CD4-positive, alpha-beta T cell (primary cell): ENCODE measurements at regions of chr5 and their contacts with region 1.

Region 1: GRCh38 chr5:154754460-154755360 is 467 bp upstream of the LARP1 start:
- DNase-seq: peak; percentile 98 to 100 (median 99)
- ATAC-seq: peak; percentile 86
- H3K4me3 ChIP-seq: peak overlapping the region; percentile 72
- H3K4me3 Mint-ChIP-seq: peak overlapping the region; percentile 90
- H3K27ac ChIP-seq: peak overlapping the region; percentile 86 to 92
- H3K27ac Mint-ChIP-seq: peak overlapping the region; percentile 93
- H3K4me1 ChIP-seq: peaks cover 26% of the 10 kb centered on the region
- H3K4me1 Mint-ChIP-seq: peaks cover 50% of the 10 kb centered on the region
- H3K27me3 ChIP-seq: no peaks in the 10 kb centered on the region
- H3K27me3 Mint-ChIP-seq: no peaks in the 10 kb centered on the region
- CTCF ChIP-seq: peak; percentile 50

Region 2: GRCh38 chr5:154189819-154190594 is 564.7 kb before region 1 on chr5:
- CTCF ChIA-PET with region 1: no interaction called
- POLR2A ChIA-PET with region 1: no interaction called
- intact Hi-C with region 1: loop called in 1 of 2 experiments (anchors 10 kb)
- DNase-seq: peak; percentile 65 to 92 (median 75)
- ATAC-seq: peak; percentile 75
- H3K4me3 ChIP-seq: peak overlapping the region; percentile 95
- H3K4me3 Mint-ChIP-seq: peak overlapping the region; percentile 94
- H3K27ac ChIP-seq: peak overlapping the region; percentile 42 to 66
- H3K27ac Mint-ChIP-seq: peak overlapping the region; percentile 81
- H3K4me1 ChIP-seq: peaks cover 35% of the 10 kb centered on the region
- H3K4me1 Mint-ChIP-seq: peaks cover 38% of the 10 kb centered on the region
- H3K27me3 ChIP-seq: no peaks in the 10 kb centered on the region
- H3K27me3 Mint-ChIP-seq: no peaks in the 10 kb centered on the region
- CTCF ChIP-seq: peak; percentile 65

Region 3: GRCh38 chr5:154647114-154647760 is 107.5 kb before region 1 on chr5:
- CTCF ChIA-PET with region 1: interaction called, 5 read pairs
- POLR2A ChIA-PET with region 1: interaction called, 3 read pairs
- intact Hi-C with region 1: loop called (anchors 2 to 5 kb)
- DNase-seq: peak in 6 of 14 experiments; percentile 4 to 24 (median 15)
- ATAC-seq: peak; percentile 32
- H3K4me3 ChIP-seq: peak overlapping the region; percentile 48
- H3K4me3 Mint-ChIP-seq: peak overlapping the region; percentile 82
- H3K27ac ChIP-seq: no peak overlapping the region
- H3K27ac Mint-ChIP-seq: no peak overlapping the region
- H3K4me1 ChIP-seq: peaks cover 13% of the 10 kb centered on the region
- H3K4me1 Mint-ChIP-seq: peaks cover 16% of the 10 kb centered on the region
- H3K27me3 ChIP-seq: peaks cover 16% of the 10 kb centered on the region in 2 experiments
- H3K27me3 Mint-ChIP-seq: peaks cover 29% of the 10 kb centered on the region
- CTCF ChIP-seq: no peak

Region 4: GRCh38 chr5:154683101-154683880 is 71.4 kb before region 1 on chr5:
- CTCF ChIA-PET with region 1: no interaction called
- POLR2A ChIA-PET with region 1: no interaction called
- intact Hi-C with region 1: loop called in 1 of 2 experiments (anchors 2 kb)
- DNase-seq: peak in 1 of 14 experiments; percentile 23
- ATAC-seq: peak; percentile 31
- H3K4me3 ChIP-seq: peak overlapping the region; percentile 67
- H3K4me3 Mint-ChIP-seq: peak overlapping the region; percentile 32
- H3K27ac ChIP-seq: no peak overlapping the region
- H3K27ac Mint-ChIP-seq: no peak overlapping the region
- H3K4me1 ChIP-seq: peaks cover 17% of the 10 kb centered on the region
- H3K4me1 Mint-ChIP-seq: peaks cover 8% of the 10 kb centered on the region
- H3K27me3 ChIP-seq: peaks cover 0 to 5% of the 10 kb centered on the region in 2 experiments
- H3K27me3 Mint-ChIP-seq: no peaks in the 10 kb centered on the region
- CTCF ChIP-seq: no peak

Region 5: DNA sequence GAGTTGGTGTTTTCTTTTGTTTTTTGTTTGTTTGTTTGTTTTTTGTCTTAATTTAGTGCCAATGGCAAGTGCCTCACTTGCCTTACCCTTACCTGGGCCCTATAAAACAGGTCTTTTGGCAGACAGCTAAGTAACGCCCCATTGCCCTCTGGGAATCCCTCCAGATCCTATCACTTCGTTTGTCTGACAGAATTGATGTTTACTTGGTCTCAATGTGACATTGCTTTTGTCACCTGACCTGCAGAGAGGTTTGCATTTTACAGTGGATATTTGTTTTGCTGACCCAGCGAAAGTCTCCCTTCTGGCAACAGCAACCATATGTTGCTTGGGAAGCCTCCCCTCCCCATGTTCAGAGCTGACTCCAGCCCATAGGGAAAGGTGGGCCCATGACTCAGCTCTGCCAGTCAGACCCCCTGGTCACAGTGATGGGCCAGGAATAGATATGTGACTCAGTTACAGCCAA is 53.6 kb before region 1 on chr5:
- CTCF ChIA-PET with region 1: no interaction called
- POLR2A ChIA-PET with region 1: no interaction called
- intact Hi-C with region 1: no loop called
- DNase-seq: no peak
- ATAC-seq: no peak
- H3K4me3 ChIP-seq: no peak overlapping the region
- H3K4me3 Mint-ChIP-seq: no peak overlapping the region
- H3K27ac ChIP-seq: no peak overlapping the region
- H3K27ac Mint-ChIP-seq: no peak overlapping the region
- H3K4me1 ChIP-seq: no peaks in the 10 kb centered on the region
- H3K4me1 Mint-ChIP-seq: no peaks in the 10 kb centered on the region
- H3K27me3 ChIP-seq: no peaks in the 10 kb centered on the region
- H3K27me3 Mint-ChIP-seq: no peaks in the 10 kb centered on the region
- CTCF ChIP-seq: no peak

Region 6: DNA sequence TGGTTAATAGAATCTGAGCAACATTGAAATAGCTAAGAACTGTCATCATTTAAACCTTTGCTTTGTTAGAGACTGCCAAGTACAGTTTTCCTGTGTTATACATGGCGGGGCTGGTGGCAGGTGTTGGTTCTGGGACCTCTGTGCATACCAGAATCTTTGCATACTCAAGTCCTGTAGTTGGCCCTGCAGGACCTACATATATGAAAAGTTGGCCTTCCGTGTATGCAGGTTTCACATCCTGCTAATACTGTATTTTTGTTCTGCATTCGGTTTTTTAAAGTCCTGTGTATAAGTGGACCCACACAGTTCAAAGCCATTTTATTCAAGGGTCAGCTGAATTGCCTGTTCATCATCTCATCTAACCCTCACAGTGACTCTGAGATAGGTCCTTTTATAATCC is 36.8 kb after region 1 on chr5:
- CTCF ChIA-PET with region 1: no interaction called
- POLR2A ChIA-PET with region 1: no interaction called
- intact Hi-C with region 1: loop called in 1 of 2 experiments (anchors 5 kb)
- DNase-seq: no peak
- ATAC-seq: no peak
- H3K4me3 ChIP-seq: no peak overlapping the region
- H3K4me3 Mint-ChIP-seq: no peak overlapping the region
- H3K27ac ChIP-seq: no peak overlapping the region
- H3K27ac Mint-ChIP-seq: peak overlapping the region; percentile 25
- H3K4me1 ChIP-seq: peaks cover 20% of the 10 kb centered on the region
- H3K4me1 Mint-ChIP-seq: peaks cover 22% of the 10 kb centered on the region
- H3K27me3 ChIP-seq: no peaks in the 10 kb centered on the region
- H3K27me3 Mint-ChIP-seq: no peaks in the 10 kb centered on the region
- CTCF ChIP-seq: no peak

Region 7: GRCh38 chr5:154811653-154812365 is 57.1 kb after region 1 on chr5:
- CTCF ChIA-PET with region 1: no interaction called
- POLR2A ChIA-PET with region 1: no interaction called
- intact Hi-C with region 1: loop called (anchors 2 to 5 kb)
- DNase-seq: peak; percentile 50 to 82 (median 62)
- ATAC-seq: peak; percentile 83
- H3K4me3 ChIP-seq: no peak overlapping the region
- H3K4me3 Mint-ChIP-seq: no peak overlapping the region
- H3K27ac ChIP-seq: no peak overlapping the region
- H3K27ac Mint-ChIP-seq: peak overlapping the region; percentile 38
- H3K4me1 ChIP-seq: peaks cover 28% of the 10 kb centered on the region
- H3K4me1 Mint-ChIP-seq: peaks cover 40% of the 10 kb centered on the region
- H3K27me3 ChIP-seq: no peaks in the 10 kb centered on the region
- H3K27me3 Mint-ChIP-seq: no peaks in the 10 kb centered on the region
- CTCF ChIP-seq: peak; percentile 94

Region 8: GRCh38 chr5:154940772-154941620 is 186.3 kb after region 1 on chr5 and contains the start of gene MRPL22:
- CTCF ChIA-PET with region 1: no interaction called
- POLR2A ChIA-PET with region 1: no interaction called
- intact Hi-C with region 1: loop called (anchors 2 to 5 kb)
- DNase-seq: peak; percentile 89 to 98 (median 94)
- ATAC-seq: peak; percentile 79
- H3K4me3 ChIP-seq: peak within 1 kb of the TSS; percentile 94
- H3K4me3 Mint-ChIP-seq: peak within 1 kb of the TSS; percentile 99
- H3K27ac ChIP-seq: peak within 1 kb of the TSS; percentile 68 to 75
- H3K27ac Mint-ChIP-seq: peak within 1 kb of the TSS; percentile 97
- H3K4me1 ChIP-seq: peaks cover 44% of the 10 kb centered on the region
- H3K4me1 Mint-ChIP-seq: peaks cover 52% of the 10 kb centered on the region
- H3K27me3 ChIP-seq: no peaks in the 10 kb centered on the region
- H3K27me3 Mint-ChIP-seq: no peaks in the 10 kb centered on the region
- CTCF ChIP-seq: no peak
- total RNA-seq, gene MRPL22: 29.9 to 30.2 TPM